ENCODE measurements at regions of chr10 and their contacts with region 1.

Region 1: DNA sequence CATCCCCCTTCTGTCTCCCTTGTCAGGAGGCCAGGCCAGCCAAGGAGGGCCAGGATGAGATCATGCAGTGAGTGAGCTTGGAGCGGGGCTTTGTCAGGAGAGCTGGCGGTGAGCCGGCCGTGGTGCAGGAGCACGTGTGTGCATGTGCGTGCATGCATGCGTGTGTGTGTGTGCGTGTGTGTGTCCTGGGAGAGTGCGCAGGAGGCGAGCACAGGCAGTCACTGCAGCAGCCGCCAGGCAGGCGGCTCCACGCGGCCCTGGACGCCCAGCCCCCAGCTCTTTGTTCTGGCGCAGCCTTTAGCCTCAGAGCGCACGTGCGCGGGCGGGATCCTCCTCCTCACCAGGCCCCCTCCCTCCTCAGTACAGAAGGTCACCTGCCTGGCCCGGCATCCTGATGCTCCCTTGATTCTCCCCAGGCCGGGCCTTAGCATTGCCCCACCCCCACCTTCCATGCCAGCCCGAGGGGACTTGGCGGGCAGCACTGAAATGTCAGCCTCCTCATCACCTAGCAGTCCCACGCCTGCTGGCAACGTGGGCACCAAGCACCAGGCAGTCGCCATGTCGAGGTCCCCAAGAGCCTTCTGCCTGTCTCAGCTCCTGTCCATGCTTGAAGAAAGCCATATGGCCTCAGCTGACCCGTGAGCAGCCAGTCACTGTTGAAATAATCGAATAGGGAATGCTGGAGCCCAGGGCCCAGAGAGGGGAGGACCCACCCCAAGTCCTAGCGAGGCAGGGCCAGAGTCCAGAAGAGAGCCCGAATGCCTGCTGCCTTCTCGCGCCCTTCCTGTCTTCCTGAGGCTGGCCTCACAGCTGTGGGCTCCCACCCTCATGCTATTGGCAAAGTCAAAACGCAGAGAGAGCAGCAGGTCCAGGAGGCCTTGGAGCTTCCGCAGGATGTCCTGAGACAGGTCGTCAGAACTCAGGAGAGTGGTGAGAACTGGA is 125.9 kb upstream of the PPIF start:
- DNase-seq: peak; percentile 81 to 95 (median 83)
- ATAC-seq: peak; percentile 64 to 77 (median 72)
- H3K4me3 ChIP-seq: no peak overlapping the region
- H3K27ac ChIP-seq: peak overlapping the region; percentile 48 to 95 (median 90)
- H3K4me1 ChIP-seq: peaks cover 38 to 70% (median 62%) of the 10 kb centered on the region in 12 donors
- H3K27me3 ChIP-seq: no peaks in the 10 kb centered on the region
- CTCF ChIP-seq: peak in 5 of 12 donors; percentile 11 to 40 (median 23)
- POLR2A ChIP-seq: no peak

Region 2: DNA sequence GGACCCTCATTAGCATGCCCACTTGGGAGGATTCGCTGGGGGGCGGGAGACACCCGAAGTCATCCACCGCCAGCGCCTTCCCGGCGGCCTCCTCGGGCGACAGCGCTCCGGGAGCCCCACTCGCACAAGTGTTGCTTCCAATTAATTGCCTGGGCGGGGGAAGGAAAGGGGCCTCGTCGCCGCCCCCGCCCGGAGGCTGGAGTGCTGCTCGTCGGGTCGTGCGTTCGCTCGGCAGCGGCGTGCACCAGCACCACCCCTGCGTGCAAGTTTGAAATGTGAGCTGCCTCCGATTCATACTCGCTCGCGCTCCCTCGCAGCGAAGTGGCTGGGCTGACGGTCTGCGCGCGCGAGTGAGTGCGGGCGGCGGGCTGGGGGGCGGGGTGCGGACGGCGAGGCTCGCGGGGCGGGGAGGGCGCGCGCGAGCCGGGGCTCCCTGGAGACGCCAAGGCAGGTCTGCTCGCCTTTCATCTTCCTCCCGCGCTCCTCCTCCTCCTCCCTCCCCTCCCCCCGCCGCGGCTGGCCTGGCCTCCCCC is 21.3 kb after region 1 on chr10:
- intact Hi-C with region 1: loop called in 2 of 10 experiments (anchors 2 kb)
- DNase-seq: peak; percentile 70 to 82 (median 75)
- ATAC-seq: peak in 3 of 4 donors; percentile 12 to 32 (median 14)
- H3K4me3 ChIP-seq: peak overlapping the region; percentile 26 to 74 (median 58)
- H3K27ac ChIP-seq: peak overlapping the region; percentile 3 to 93 (median 86)
- H3K4me1 ChIP-seq: peaks cover 44 to 97% (median 83%) of the 10 kb centered on the region in 12 donors
- H3K27me3 ChIP-seq: no peaks in the 10 kb centered on the region
- CTCF ChIP-seq: no peak
- POLR2A ChIP-seq: no peak

Region 3: GRCh38 chr10:79266543-79267312 is 45.3 kb after region 1 on chr10:
- intact Hi-C with region 1: loop called in 3 of 10 experiments (anchors 5 to 10 kb)
- DNase-seq: peak; percentile 78 to 91 (median 83)
- ATAC-seq: peak; percentile 32 to 82 (median 66)
- H3K4me3 ChIP-seq: peak overlapping the region in 4 of 12 donors; percentile 1 to 21 (median 16)
- H3K27ac ChIP-seq: peak overlapping the region; percentile 25 to 95 (median 83)
- H3K4me1 ChIP-seq: peaks cover 28 to 100% (median 91%) of the 10 kb centered on the region in 12 donors
- H3K27me3 ChIP-seq: no peaks in the 10 kb centered on the region
- CTCF ChIP-seq: no peak
- POLR2A ChIP-seq: no peak

Region 4: GRCh38 chr10:79274279-79275104 is 53.1 kb after region 1 on chr10:
- intact Hi-C with region 1: loop called in 5 of 10 experiments (anchors 2 to 10 kb)
- DNase-seq: peak; percentile 86 to 94 (median 87)
- ATAC-seq: peak; percentile 84 to 90 (median 88)
- H3K4me3 ChIP-seq: peak overlapping the region in 2 of 12 donors; percentile 1
- H3K27ac ChIP-seq: peak overlapping the region; percentile 53 to 97 (median 86)
- H3K4me1 ChIP-seq: peaks cover 16 to 85% (median 69%) of the 10 kb centered on the region in 12 donors
- H3K27me3 ChIP-seq: no peaks in the 10 kb centered on the region
- CTCF ChIP-seq: peak in 6 of 12 donors; percentile 12 to 43 (median 23)
- POLR2A ChIP-seq: no peak

Region 5: DNA sequence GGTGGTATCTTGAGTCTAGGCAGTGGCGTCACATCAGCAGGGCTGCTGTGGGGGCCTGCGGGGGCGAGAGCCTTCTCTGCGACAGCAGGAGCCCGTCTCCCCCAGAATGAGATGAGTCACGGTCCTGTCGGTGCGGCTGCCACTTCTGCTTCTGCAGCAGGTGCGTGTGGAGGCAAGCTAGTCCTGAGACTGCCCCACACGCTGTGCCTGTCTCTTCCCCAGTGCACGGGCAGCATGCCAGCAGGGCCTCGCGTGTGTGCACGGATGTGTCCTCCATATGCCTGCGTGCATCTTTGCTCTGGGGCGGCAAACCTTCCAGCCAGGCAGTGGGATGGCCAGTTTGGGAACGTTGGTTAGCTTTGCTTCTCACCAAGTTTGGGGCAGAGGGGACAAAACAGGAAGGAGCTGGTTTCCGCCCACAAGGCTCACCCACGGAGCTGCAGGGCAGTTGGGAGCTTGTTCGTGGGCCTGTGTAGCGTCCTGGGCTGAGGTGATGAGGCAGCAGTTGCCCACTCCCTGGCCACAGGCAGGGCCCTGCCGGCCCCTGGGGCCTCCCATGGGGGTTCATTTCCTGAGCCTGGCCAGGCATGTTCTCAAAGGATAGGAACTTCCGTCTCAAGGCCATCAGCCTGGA is 65.1 kb after region 1 on chr10:
- intact Hi-C with region 1: loop called in 1 of 10 experiments (anchors 10 kb)
- DNase-seq: peak; percentile 64 to 91 (median 74)
- ATAC-seq: peak in 3 of 4 donors; percentile 41 to 65 (median 52)
- H3K4me3 ChIP-seq: peak overlapping the region in 1 of 12 donors; percentile 5
- H3K27ac ChIP-seq: peak overlapping the region in 11 of 12 donors; percentile 31 to 89 (median 49)
- H3K4me1 ChIP-seq: peaks cover 6 to 65% (median 38%) of the 10 kb centered on the region in 12 donors
- H3K27me3 ChIP-seq: no peaks in the 10 kb centered on the region
- CTCF ChIP-seq: no peak
- POLR2A ChIP-seq: no peak

Region 6: DNA sequence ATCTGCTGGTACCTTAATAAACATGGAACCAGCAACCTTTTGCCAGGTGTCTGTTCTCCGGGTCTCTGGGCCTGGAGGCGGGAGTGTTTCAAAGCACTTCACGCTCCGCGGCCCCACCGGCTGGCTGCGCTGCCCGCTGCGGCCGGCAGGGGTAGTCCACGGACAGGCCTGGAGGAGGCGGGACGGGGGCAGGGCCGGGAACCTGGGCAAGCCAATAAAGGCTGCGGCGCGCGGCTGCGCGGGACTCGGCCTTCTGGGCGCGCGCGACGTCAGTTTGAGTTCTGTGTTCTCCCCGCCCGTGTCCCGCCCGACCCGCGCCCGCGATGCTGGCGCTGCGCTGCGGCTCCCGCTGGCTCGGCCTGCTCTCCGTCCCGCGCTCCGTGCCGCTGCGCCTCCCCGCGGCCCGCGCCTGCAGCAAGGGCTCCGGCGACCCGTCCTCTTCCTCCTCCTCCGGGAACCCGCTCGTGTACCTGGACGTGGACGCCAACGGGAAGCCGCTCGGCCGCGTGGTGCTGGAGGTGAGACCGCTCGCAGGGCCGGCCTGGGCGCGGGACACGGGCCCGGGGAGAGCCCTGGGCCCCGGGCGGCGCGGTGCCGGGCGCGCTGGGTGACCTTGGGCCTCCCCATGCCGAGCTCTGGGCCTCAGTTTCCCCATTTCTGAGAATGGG is 126.0 kb after region 1 on chr10 and contains the start of gene PPIF:
- intact Hi-C with region 1: loop called in 1 of 10 experiments (anchors 5 kb)
- DNase-seq: peak; percentile 94 to 98 (median 96)
- ATAC-seq: peak; percentile 77 to 92 (median 90)
- H3K4me3 ChIP-seq: peak within 1 kb of the TSS; percentile 68 to 98 (median 81)
- H3K27ac ChIP-seq: peak within 1 kb of the TSS; percentile 84 to 97 (median 92)
- H3K4me1 ChIP-seq: peaks cover 0 to 54% (median 23%) of the 10 kb centered on the region in 12 donors
- H3K27me3 ChIP-seq: no peaks in the 10 kb centered on the region
- CTCF ChIP-seq: peak; percentile 88 to 99 (median 98)
- POLR2A ChIP-seq: peak; percentile 29 to 85
- total RNA-seq, gene PPIF: 86.3 to 180 (median 128) TPM

Measured in heart left ventricle (tissue), 16 donors.